ENCODE measurements at regions of chr1 and their contacts with region 1.

Region 1: DNA sequence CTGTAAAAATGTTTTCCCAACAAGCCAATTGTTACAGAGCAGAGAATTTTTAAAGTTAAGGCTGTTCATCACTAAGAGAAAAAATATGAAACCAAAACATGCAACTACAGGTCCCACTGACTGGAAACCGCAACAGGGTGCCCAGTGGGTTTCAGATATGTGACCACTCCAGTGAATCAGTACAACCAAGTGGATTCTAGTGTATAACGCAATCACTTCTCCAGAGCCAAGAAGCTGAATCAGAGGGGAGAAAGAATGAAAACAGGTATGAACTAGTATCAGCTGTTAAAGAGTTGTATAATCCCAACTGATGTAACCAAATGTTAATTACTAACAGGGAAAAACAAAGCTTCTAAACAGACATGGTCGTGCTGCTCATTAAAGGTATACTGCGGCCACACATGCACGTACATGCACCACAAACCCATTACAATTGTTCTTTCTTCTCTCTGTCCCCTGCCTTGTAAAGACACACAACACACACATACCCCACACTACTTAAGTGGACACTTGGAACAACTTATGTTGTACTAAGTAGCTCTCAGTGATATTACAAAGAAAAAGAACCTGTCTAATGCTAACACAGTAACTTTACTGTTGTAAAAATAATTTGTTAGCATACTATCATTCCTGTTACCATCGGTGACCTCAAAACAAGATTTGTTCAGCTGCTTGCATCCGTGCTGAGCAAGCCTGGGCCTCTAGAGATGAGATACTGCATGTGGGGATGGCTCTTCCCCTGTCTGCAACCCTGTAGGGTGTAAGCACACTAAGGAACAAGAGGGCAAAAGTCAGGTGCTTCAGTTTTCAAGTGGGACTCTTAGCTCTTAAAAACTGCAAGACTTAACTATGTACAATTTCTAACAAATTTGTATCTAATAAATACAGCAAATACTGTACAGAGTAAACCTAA is 74.2 kb downstream of the PTPN14 start:
- DNase-seq: no peak
- H3K4me3 Mint-ChIP-seq: no peak overlapping the region
- H3K27ac Mint-ChIP-seq: no peak overlapping the region
- H3K4me1 Mint-ChIP-seq: peaks cover 14% of the 10 kb centered on the region
- H3K27me3 Mint-ChIP-seq: peaks cover 13% of the 10 kb centered on the region

Region 2: DNA sequence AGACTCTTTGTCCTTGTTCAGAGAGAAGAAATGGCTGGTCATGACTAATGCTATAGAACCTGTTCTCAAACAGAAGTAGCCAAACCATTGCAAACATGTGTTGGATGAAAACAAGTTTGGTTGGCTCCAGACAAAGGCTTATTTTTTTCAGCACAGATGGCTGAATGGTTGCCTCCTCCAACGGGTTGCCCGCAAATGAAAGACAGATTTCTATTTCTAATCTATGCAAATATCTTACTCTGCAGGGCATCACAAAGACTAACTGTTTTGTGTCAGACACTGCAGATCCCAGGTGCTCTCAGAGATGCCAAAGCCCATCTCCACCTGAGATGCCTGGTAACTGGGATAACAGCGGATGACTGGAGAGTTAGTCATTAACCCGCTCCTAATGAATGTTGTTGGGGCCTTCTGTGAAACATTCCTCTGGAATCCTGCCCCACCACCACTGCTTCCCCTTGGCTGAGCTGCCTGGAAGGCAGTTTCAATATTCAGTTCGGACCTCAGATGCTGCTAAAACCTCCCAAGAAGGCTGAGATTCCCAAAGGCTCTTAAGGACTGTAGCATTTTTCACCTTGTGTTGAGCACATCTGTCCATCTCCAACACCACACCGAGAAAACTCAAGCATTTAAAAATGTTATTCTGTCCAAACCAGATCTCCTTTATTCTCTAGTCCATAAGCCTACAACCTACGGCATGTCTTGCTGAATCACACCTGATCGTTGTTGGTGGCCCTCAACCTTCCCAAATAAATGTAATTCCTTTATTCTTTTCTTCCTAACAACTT is 30.2 kb before region 1 on chr1:
- intact Hi-C with region 1: no loop called
- DNase-seq: no peak
- H3K4me3 Mint-ChIP-seq: no peak overlapping the region
- H3K27ac Mint-ChIP-seq: peak overlapping the region; percentile 94
- H3K4me1 Mint-ChIP-seq: peaks cover 62% of the 10 kb centered on the region
- H3K27me3 Mint-ChIP-seq: no peaks in the 10 kb centered on the region

Region 3: DNA sequence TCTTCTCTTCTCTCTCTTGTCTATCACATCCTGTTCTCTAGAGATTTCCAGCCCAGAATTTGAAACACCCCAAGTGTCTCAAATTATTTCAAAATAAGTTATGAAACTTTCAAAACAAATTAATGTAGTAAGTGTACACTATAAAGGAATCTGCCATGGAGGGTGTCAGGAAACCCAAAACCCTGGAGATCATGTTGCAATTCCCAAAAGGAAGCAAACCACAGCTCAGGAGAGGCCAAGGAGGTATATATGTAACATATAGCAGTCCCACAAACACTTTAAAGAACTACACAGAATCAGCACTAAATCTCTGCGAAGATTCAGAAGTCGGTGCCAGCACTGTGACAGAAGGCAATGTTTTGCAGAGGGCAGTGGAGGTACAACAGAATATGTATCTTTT is 47.6 kb after region 1 on chr1:
- intact Hi-C with region 1: loop called (anchors 5 kb)
- DNase-seq: no peak
- H3K4me3 Mint-ChIP-seq: no peak overlapping the region
- H3K27ac Mint-ChIP-seq: no peak overlapping the region
- H3K4me1 Mint-ChIP-seq: peaks cover 16% of the 10 kb centered on the region
- H3K27me3 Mint-ChIP-seq: peaks cover 7% of the 10 kb centered on the region

Region 4: DNA sequence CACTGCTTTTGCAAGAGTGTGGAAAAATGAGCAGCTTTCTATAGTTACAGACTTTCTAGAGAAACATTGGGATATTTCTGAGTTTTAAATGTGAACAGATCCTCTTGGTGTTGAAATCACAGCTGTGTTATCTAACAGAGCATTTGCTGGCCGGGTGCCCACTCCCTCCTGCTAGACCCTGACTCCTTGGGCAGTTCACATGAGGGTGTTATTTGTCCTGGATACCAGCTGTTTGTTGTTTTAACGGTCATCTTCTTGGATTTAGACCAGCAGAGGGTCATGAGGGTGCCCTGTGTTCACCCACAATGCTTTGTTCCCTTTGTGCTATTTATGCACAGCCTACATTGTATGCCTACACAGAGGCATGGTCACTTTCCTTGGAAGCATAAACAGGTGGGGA is 192.9 kb after region 1 on chr1:
- intact Hi-C with region 1: no loop called
- DNase-seq: no peak
- H3K4me3 Mint-ChIP-seq: no peak overlapping the region
- H3K27ac Mint-ChIP-seq: no peak overlapping the region
- H3K4me1 Mint-ChIP-seq: no peaks in the 10 kb centered on the region
- H3K27me3 Mint-ChIP-seq: no peaks in the 10 kb centered on the region

Region 5: DNA sequence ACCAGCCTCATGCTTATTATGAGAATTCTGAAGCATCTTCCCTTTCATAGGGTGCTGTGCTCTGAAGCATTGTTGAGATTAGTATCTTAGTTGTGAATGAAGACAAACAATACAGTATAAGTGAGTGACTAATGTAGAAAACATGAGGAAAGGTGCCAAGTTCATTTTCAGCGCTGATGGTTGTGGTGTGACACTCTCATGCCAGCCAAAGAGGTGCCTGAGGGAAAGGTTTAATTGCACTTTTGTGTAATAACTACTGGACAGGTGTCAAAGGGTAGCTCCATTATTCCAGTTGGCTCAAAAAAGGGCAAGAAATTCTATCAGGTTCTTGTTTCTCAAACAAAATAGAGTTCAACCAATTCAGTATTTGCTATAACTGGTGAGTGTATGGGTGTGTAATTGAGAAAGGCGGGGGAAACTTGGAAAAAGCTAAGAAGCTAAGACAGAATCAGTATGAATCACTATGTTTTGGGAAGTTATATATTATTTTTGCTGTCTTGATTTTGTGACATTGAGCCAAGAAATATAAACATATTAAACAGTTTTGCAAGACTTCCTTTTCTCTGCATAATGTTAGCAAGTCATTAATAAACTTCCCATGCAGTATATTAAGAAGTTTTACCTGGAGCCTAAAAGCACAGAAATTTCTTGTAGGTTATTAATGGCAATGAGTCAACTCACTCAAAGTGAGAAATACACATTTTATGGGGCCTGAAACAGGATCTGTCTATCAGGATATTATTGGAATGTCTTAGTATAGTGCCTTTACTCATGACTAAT is 637.1 kb after region 1 on chr1:
- intact Hi-C with region 1: no loop called
- DNase-seq: no peak
- H3K4me3 Mint-ChIP-seq: no peak overlapping the region
- H3K27ac Mint-ChIP-seq: no peak overlapping the region
- H3K4me1 Mint-ChIP-seq: no peaks in the 10 kb centered on the region
- H3K27me3 Mint-ChIP-seq: no peaks in the 10 kb centered on the region